Activated B cell treated with CpG ODN at 0.5 μM for 24 hours (primary cell): ENCODE measurements at regions of chr1 and their contacts with region 1.

Region 1: DNA sequence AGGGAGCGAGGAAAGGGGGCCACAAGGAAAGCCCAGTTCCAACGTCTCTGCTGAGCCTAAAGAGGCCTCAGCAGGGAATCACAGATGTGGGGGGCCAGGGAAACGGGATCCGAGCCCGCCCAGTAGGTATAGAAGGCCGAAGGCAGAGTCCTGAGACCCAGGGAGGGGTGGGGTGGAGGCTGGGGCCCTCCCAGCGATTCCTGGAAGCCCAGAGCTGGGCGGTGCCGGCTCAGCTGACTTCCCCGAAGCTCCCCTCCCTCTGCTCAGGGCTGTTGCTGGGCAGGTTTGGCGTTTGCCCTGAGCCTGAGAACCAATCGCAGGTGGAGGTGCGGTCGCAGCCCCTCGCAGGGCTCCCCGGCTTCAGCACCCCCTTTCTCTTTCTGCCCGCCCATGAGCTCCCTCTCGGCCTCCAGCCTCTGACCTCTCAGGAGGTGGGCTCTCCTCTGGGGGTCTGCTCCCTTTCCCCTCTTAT is 12.8 kb downstream of the ADAMTSL4 start:
- DNase-seq: peak; percentile 79
- ATAC-seq: peak; percentile 43
- H3K4me3 Mint-ChIP-seq: peak overlapping the region; percentile 96
- H3K27ac Mint-ChIP-seq: peak overlapping the region; percentile 98
- H3K4me1 Mint-ChIP-seq: peaks cover 63% of the 10 kb centered on the region
- H3K27me3 Mint-ChIP-seq: no peaks in the 10 kb centered on the region
- CTCF ChIP-seq: no peak

Region 2: DNA sequence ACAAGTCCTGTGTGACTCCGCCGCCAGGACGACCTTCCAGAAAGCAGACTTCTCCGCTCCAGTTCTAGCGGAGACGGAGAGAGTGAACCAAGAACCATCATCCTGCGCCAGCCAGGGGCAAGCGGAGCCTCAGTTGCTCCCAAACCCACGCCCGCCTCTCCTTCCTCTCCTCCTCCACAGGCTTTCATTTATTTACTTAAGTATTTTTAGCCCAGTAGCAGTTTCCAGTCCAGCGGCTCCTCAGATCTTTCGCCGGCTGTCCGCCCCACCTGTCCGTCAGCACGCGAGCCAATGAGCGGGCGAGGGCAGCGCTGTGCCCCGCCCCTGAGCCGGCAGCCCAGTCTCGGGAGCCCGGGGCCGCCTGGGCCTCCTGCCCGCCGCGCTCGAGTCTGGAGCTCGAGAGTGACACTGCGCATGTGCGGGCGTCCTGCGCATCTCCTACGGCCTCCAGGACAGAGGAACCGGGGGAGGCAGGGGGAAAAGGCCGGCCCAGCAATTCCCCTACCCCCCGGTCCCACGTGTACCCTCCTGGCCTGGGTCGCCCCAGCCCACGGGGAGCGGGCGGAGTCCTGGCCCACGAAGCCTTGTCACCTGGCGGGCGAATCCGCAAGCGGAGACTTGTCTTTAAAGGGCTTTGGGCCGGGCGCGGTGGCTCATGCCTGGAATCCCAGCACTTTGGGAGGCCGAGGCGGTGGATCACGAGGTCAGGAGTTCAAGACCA is 46.5 kb before region 1 on chr1 and contains the start of gene FALEC:
- CTCF ChIA-PET with region 1: interaction called, 8 read pairs
- POLR2A ChIA-PET with region 1: interaction called, 27 read pairs
- intact Hi-C with region 1: loop called (anchors 5 kb)
- DNase-seq: peak; percentile 93
- ATAC-seq: peak; percentile 98
- H3K4me3 Mint-ChIP-seq: peak within 1 kb of the TSS; percentile 95
- H3K27ac Mint-ChIP-seq: peak within 1 kb of the TSS; percentile 83
- H3K4me1 Mint-ChIP-seq: peaks cover 27% of the 10 kb centered on the region
- H3K27me3 Mint-ChIP-seq: no peaks in the 10 kb centered on the region
- CTCF ChIP-seq: no peak
- total RNA-seq, gene FALEC: 1.1 TPM in 1 of 2 replicates, not detected in the other

Region 3: DNA sequence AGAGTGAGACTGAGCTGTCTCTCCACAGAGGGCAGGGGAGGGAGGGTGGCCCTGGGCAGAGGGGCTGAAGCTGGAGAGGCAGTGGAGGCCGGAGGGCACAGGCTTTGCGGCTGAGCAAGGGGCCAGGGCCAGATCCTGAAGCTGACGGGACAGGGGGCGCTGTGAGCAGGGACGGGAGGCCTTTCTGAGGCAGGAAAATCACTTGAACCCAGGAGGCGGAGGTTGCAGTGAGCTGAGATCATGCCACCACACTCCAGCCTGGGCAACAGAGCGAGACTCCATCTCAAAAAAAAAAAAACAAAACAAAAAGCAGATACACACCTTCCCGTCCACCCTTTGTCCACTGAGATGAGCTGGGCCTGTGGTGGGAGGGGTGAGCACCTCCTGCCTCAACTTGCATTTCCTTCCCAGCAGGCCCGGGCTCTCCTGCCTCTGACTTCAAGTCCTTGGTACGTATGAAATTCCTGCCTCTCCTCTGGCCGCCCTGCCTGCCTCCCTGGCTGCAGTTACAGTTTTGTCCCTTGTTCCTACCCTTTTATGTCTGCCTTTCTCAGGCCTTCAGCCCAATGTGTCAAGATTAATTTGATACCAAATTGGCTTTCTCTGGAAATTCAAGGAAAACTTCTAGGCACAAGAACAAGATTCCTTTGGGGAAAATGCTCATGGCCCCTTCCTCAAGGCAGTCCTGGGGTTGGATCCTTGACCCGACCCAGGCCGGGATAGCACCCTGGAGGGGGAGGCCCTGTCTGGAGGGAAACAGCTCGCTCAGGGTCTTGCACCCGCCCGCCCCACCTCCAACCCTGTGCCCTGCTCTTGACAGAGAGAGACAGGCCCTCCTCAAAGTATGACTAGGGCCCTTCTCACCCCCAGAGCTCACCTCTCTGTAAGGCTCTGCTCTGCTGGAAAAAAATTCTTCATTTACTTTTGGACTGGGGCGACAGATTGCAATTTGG is 24.0 kb before region 1 on chr1:
- CTCF ChIA-PET with region 1: no interaction called
- POLR2A ChIA-PET with region 1: no interaction called
- intact Hi-C with region 1: no loop called
- DNase-seq: no peak
- ATAC-seq: no peak
- H3K4me3 Mint-ChIP-seq: no peak overlapping the region
- H3K27ac Mint-ChIP-seq: no peak overlapping the region
- H3K4me1 Mint-ChIP-seq: no peaks in the 10 kb centered on the region
- H3K27me3 Mint-ChIP-seq: no peaks in the 10 kb centered on the region
- CTCF ChIP-seq: no peak

Region 4: DNA sequence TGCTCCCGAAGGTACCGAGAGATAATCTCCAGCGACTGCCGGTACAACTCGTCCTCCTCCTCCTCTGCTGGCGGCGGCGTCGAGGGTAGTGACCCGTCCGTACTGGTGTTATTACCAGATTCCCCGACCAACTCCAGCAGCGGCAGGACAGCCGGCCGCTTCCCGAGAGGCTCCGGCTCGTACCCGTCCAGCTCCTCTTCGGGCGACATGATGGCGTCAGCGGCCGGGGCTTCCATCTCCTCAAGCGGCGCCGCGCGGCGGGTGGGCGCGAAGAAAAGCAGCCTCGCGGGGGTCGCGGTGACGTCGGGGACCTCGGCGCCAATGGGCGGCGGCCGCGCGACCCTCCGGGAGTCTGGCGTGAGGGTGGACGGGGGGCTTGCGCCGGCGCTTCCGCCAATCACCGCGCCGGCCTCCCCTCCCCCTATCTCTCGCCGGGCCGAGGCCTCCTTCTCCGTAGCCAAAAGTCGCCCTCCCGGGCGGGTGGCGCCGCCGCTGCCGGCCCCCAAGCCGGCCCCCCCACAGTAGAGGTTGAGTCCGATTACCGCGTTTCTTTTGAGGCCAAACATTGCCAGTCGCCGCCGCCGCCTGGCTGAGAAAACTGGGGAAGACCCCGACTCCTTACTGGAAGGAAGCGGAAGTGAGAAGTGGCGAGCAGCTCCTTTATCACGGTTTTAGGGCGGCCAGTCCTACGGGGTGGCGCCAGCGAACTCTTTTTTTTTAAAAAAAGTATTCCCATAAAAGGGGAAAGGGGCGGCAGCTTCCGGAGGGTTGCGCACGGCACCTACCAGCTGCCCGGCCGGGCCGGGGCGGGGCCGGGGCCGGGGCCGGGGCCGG is 17.2 kb after region 1 on chr1 and contains the start of gene MCL1:
- CTCF ChIA-PET with region 1: interaction called, 196 read pairs
- POLR2A ChIA-PET with region 1: interaction called, 1,106 read pairs
- intact Hi-C with region 1: loop called (anchors 1 kb)
- DNase-seq: peak; percentile 81
- ATAC-seq: peak; percentile 82
- H3K4me3 Mint-ChIP-seq: peak within 1 kb of the TSS; percentile 95
- H3K27ac Mint-ChIP-seq: peak within 1 kb of the TSS; percentile 98
- H3K4me1 Mint-ChIP-seq: peaks cover 49% of the 10 kb centered on the region
- H3K27me3 Mint-ChIP-seq: no peaks in the 10 kb centered on the region
- CTCF ChIP-seq: no peak
- total RNA-seq, gene MCL1: 224 and 233 TPM in 2 replicates

Region 5: GRCh38 chr1:150629115-150629928 is 67.3 kb after region 1 on chr1 and contains the start of gene ENSA:
- CTCF ChIA-PET with region 1: interaction called, 358 read pairs
- POLR2A ChIA-PET with region 1: interaction called, 189 read pairs
- intact Hi-C with region 1: loop called (anchors 2 kb)
- DNase-seq: peak; percentile 84
- ATAC-seq: peak; percentile 88
- H3K4me3 Mint-ChIP-seq: no peak within 1 kb of the TSS
- H3K27ac Mint-ChIP-seq: no peak within 1 kb of the TSS
- H3K4me1 Mint-ChIP-seq: peaks cover 21% of the 10 kb centered on the region
- H3K27me3 Mint-ChIP-seq: no peaks in the 10 kb centered on the region
- CTCF ChIP-seq: no peak
- total RNA-seq, gene ENSA: 202 and 227 TPM in 2 replicates

Region 6: DNA sequence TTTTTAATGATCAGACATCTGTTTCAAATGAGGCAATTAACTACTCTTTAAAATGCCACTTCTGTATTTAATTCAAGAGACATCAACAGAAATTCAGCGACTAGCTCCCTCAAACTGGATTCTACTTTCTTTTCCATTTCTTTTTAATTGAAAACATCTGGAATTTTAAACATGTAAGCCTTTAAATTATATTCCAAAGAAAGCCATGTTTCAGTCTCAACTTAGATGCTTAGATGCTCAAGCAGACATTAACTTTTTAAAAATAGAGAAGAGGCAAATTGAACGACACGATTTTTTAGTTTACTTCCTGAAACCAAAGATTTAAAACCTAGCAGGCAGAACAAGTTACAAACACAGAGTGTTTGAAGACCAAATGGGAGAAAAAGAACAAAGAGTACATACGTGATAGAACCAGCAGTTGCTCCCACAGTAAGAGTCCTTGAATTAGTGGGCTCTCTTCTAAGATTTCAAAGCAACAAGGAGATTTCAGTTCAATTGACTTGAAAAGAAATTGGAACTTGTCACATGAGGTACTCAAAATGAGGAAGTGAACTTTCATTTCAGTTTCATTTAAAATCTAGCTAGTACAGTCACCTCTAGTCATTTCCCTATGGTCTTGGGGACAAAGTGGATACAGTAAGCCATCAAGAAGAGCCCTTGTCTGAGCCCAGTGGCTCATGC is 203.4 kb after region 1 on chr1 and contains the start of gene CTSS:
- CTCF ChIA-PET with region 1: interaction called, 3 read pairs
- POLR2A ChIA-PET with region 1: interaction called, 4 read pairs
- intact Hi-C with region 1: loop called (anchors 10 kb)
- DNase-seq: no peak
- ATAC-seq: peak; percentile 88
- H3K4me3 Mint-ChIP-seq: peak within 1 kb of the TSS; percentile 93
- H3K27ac Mint-ChIP-seq: peak within 1 kb of the TSS; percentile 97
- H3K4me1 Mint-ChIP-seq: peaks cover 55% of the 10 kb centered on the region
- H3K27me3 Mint-ChIP-seq: no peaks in the 10 kb centered on the region
- CTCF ChIP-seq: no peak
- total RNA-seq, gene CTSS: 162 and 165 TPM in 2 replicates

Region 7: DNA sequence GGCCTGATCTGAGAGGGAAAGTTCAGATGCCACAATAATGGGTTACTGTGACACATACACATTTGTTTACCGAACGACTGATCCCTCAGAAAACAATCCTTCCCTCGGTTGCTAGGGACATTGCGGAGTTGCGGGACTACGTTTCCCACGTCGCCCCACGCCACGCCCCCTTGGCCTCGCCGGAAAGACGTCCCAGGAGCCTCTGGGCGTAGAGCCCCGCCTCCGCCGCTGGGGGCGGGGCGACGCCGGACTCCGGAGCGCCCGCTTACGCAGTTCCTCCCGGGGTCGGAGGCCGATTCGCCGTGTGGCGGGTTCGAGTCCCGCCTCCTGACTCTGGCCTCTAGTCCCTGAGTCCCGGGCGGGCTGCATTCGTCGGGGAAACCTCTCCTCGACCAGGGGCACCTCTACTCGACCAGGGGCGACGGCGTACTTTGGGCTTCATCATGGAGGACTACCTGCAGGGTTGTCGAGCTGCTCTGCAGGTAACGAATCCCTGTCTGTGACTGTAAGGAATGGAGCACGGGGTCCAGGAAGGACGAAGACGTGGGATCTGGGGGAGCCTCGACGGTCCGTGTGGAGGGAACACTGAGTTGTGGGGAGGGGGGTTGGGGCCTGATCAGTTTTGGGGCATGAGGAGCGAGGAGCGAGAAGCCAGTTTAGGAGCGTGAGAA is 446.3 kb after region 1 on chr1 and contains the start of gene PRUNE1:
- CTCF ChIA-PET with region 1: interaction called, 5 read pairs
- POLR2A ChIA-PET with region 1: no interaction called
- intact Hi-C with region 1: loop called (anchors 5 kb)
- DNase-seq: peak; percentile 91
- ATAC-seq: peak; percentile 94
- H3K4me3 Mint-ChIP-seq: peak within 1 kb of the TSS; percentile 98
- H3K27ac Mint-ChIP-seq: peak within 1 kb of the TSS; percentile 93
- H3K4me1 Mint-ChIP-seq: peaks cover 66% of the 10 kb centered on the region
- H3K27me3 Mint-ChIP-seq: no peaks in the 10 kb centered on the region
- CTCF ChIP-seq: no peak
- total RNA-seq, gene PRUNE1: 12.9 and 14.2 TPM in 2 replicates